CD8-positive, alpha-beta T cell (primary cell): ENCODE measurements at regions of chr17 and their contacts with region 1.

Region 1: GRCh38 chr17:69404382-69404781 is 10.1 kb upstream of the MAP2K6 start:
- DNase-seq: no peak
- ATAC-seq: no peak
- H3K4me3 ChIP-seq: no peak overlapping the region
- H3K4me3 Mint-ChIP-seq: no peak overlapping the region
- H3K27ac ChIP-seq: no peak overlapping the region
- H3K27ac Mint-ChIP-seq: no peak overlapping the region
- H3K4me1 ChIP-seq: no peaks in the 10 kb centered on the region
- H3K4me1 Mint-ChIP-seq: peaks cover 4% of the 10 kb centered on the region
- H3K27me3 ChIP-seq: no peaks in the 10 kb centered on the region
- H3K27me3 Mint-ChIP-seq: no peaks in the 10 kb centered on the region
- CTCF ChIP-seq: no peak

Region 2: DNA sequence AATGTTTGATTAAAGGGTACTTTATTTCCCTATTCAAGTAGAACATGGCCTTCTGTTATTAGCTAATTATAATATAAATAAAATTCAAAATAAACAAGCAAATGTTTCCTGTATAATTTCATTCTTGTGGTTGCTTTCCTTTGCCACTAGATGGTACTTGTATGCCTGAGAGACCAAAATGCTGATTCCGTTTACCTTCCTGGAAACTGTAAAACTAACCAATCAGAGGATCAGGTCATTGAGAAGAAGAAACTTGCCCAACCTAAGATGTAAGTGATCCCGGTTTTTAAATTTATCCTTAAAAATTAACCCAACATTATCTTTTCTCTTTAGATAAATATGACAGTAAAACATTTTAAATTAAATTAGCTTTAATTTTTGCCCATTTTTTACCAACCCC is 69.3 kb before region 1 on chr17:
- CTCF ChIA-PET with region 1: no interaction called
- POLR2A ChIA-PET with region 1: no interaction called
- intact Hi-C with region 1: loop called in 1 of 2 experiments (anchors 5 kb)
- DNase-seq: peak in 2 of 9 experiments; percentile 25 to 41
- ATAC-seq: no peak
- H3K4me3 ChIP-seq: no peak overlapping the region
- H3K4me3 Mint-ChIP-seq: no peak overlapping the region
- H3K27ac ChIP-seq: no peak overlapping the region
- H3K27ac Mint-ChIP-seq: no peak overlapping the region
- H3K4me1 ChIP-seq: no peaks in the 10 kb centered on the region
- H3K4me1 Mint-ChIP-seq: no peaks in the 10 kb centered on the region
- H3K27me3 ChIP-seq: peaks cover 0 to 3% of the 10 kb centered on the region in 2 experiments
- H3K27me3 Mint-ChIP-seq: peaks cover 11% of the 10 kb centered on the region
- CTCF ChIP-seq: peak; percentile 22

Region 3: DNA sequence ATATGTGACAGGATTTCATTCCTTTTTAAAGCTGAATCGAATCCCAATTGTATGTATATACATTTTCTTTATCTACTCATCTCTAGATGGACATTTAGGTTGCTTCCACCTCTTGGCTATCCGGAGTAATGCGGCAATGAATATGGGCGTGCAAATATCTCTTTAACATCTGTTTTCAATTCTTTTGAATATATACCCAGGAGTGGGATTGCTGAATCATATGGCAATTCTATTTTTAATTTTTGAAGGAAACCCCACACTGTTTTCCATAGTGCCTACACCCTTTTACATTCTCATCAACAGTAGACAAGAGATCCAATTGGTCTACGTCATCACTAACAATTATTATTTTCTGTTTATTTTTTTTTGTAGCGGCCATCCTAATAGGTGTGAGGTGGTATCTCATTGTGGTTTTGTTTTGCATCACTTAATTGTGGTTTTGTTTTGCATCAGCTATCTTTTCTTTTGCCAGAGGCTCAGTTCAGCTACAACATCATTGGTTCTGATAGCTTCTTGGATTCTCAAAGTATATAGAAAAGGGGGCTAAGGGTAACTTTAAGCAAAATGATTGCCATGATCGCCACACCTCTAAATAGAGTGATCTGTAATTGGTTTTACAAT is 15.4 kb before region 1 on chr17:
- CTCF ChIA-PET with region 1: interaction called, 17 read pairs
- POLR2A ChIA-PET with region 1: no interaction called
- intact Hi-C with region 1: no loop called
- DNase-seq: no peak
- ATAC-seq: no peak
- H3K4me3 ChIP-seq: no peak overlapping the region
- H3K4me3 Mint-ChIP-seq: no peak overlapping the region
- H3K27ac ChIP-seq: no peak overlapping the region
- H3K27ac Mint-ChIP-seq: no peak overlapping the region
- H3K4me1 ChIP-seq: no peaks in the 10 kb centered on the region
- H3K4me1 Mint-ChIP-seq: no peaks in the 10 kb centered on the region
- H3K27me3 ChIP-seq: peaks cover 0 to 3% of the 10 kb centered on the region in 2 experiments
- H3K27me3 Mint-ChIP-seq: peaks cover 12% of the 10 kb centered on the region
- CTCF ChIP-seq: no peak